CD4-positive, alpha-beta memory T cell (primary cell): ENCODE measurements at regions of chr10 and their contacts with region 1.

Region 1: GRCh38 chr10:24901686-24902399 is 50.6 kb downstream of the PRTFDC1 start:
- DNase-seq: no peak
- H3K4me3 ChIP-seq: no peak overlapping the region
- H3K4me3 Mint-ChIP-seq: peak overlapping the region in 5 of 8 donors; percentile 38 to 69 (median 66)
- H3K27ac ChIP-seq: no peak overlapping the region
- H3K27ac Mint-ChIP-seq: peak overlapping the region in 6 of 7 donors; percentile 11 to 86 (median 71)
- H3K4me1 ChIP-seq: peaks cover 42% of the 10 kb centered on the region
- H3K4me1 Mint-ChIP-seq: peaks cover 27 to 60% (median 35%) of the 10 kb centered on the region in 4 donors
- H3K27me3 ChIP-seq: no peaks in the 10 kb centered on the region
- H3K27me3 Mint-ChIP-seq: no peaks in the 10 kb centered on the region

Region 2: DNA sequence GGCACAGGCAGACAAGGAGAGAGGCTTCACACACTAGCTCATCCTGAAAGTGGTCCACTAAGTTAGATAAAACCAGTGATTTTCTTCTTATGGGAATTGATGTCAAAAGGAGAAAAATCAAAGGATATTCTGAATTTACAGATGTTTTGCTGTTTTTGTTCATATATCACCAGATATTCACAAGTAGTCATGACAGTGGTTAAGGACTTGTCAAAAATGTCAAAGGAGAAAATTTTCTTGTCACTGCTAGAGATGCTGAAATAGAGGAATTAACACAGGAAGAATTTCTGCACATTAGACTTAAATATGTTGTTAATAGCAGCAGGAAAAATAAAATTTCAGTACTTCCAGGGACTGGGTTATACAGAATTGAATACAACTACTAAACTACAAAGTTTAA is 27.7 kb before region 1 on chr10:
- CTCF ChIA-PET with region 1: no interaction called
- POLR2A ChIA-PET with region 1: no interaction called
- intact Hi-C with region 1: no loop called
- DNase-seq: no peak
- H3K4me3 ChIP-seq: no peak overlapping the region
- H3K4me3 Mint-ChIP-seq: no peak overlapping the region
- H3K27ac ChIP-seq: no peak overlapping the region
- H3K27ac Mint-ChIP-seq: peak overlapping the region in 1 of 7 donors; percentile 37
- H3K4me1 ChIP-seq: peaks cover 4% of the 10 kb centered on the region
- H3K4me1 Mint-ChIP-seq: peaks cover 11 to 17% (median 13%) of the 10 kb centered on the region in 4 donors
- H3K27me3 ChIP-seq: no peaks in the 10 kb centered on the region
- H3K27me3 Mint-ChIP-seq: no peaks in the 10 kb centered on the region

Region 3: DNA sequence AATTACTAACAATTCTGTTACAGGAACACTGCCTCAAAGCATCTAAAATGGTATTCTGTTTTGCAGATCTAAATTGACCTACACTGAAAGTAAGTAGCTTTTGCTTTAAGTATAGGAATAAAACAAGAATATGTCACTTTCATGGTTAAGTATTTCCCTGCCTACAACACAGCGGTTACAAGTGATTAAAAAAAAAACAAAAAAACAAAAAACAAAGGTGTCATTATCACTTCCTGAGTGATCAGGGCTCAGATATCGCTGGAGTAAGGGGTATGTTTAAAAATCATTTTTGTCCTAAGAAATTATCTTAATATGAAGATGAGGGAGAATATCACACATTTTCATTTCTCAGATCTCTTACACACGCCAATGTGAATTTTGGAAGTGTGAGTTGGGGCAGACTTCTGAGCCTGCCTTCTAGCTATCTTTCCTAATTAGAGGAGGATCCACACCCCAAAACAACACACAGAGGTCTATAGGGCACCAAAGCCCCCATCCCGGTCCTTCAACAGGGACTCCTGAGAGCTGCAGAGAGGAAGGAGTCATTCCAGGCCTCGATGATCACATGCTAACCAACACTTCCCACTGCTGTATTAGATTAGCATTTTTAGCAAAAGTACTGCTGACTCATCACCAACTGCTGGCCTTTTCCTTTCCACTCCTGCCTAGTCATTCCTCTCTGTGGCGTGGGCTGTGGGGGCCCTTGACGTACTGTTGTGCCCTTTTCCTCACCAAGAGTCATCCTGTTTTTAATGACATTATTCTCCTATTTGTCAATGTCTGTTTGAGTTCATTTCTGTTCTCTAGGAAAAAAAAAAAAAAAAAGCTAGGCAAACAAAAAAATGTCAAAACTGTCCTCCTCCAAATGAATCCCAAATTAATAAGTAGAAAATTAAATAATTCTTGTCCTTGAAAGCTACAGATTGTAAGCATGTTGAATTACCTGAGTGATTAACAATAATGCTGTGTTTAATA is 19.4 kb after region 1 on chr10:
- CTCF ChIA-PET with region 1: no interaction called
- POLR2A ChIA-PET with region 1: no interaction called
- intact Hi-C with region 1: loop called (anchors 2 kb)
- DNase-seq: peak in 1 of 5 donors; percentile 15
- H3K4me3 ChIP-seq: no peak overlapping the region
- H3K4me3 Mint-ChIP-seq: peak overlapping the region in 7 of 8 donors; percentile 13 to 73 (median 41)
- H3K27ac ChIP-seq: no peak overlapping the region
- H3K27ac Mint-ChIP-seq: peak overlapping the region in 6 of 7 donors; percentile 43 to 81 (median 73)
- H3K4me1 ChIP-seq: peaks cover 13% of the 10 kb centered on the region
- H3K4me1 Mint-ChIP-seq: peaks cover 9 to 18% (median 14%) of the 10 kb centered on the region in 4 donors
- H3K27me3 ChIP-seq: no peaks in the 10 kb centered on the region
- H3K27me3 Mint-ChIP-seq: no peaks in the 10 kb centered on the region

Region 4: DNA sequence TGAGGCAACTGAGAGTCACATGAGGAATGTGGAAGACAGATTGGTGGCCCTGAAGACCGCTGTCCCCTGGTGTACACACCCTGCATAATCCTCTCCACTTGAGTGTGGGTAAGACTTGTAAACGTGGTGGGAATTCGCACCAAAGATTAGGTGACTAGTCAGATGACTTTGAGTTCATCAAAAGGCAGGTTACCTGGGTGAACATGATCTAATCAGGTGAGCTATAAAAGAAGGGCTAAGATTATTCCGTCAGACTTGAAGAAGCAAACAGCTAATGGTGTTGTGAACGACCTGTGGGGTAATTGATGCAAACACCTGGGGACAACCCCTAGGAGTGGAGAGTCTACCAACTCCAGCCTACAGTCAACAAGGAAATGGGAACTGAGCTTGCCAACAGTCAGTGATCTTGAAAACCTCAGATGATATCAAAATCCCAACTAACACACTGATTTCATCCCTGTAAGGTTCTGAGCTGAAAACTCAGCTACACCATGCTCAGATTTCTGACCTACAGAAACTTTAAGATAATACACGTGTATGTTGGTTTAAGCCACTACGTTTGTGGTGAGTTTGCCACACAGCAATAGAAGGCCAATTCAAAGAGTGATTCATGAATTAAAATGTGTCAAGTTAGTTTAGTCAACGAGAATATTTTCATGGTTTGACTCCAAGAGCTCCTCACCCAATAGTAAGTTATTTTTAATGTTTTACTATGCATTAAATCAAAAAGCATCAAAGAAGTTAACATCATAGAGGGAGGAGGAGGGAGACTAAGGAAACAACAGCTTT is 33.9 kb after region 1 on chr10:
- CTCF ChIA-PET with region 1: interaction called, 3 read pairs
- POLR2A ChIA-PET with region 1: no interaction called
- intact Hi-C with region 1: loop called (anchors 5 kb)
- DNase-seq: no peak
- H3K4me3 ChIP-seq: no peak overlapping the region
- H3K4me3 Mint-ChIP-seq: no peak overlapping the region
- H3K27ac ChIP-seq: no peak overlapping the region
- H3K27ac Mint-ChIP-seq: no peak overlapping the region
- H3K4me1 ChIP-seq: no peaks in the 10 kb centered on the region
- H3K4me1 Mint-ChIP-seq: peaks cover 0 to 1% (median 0%) of the 10 kb centered on the region in 4 donors
- H3K27me3 ChIP-seq: no peaks in the 10 kb centered on the region
- H3K27me3 Mint-ChIP-seq: no peaks in the 10 kb centered on the region